Activated T-helper 2 cell treated with anti-CD3 and anti-CD28 coated beads, Interferon-gamma antibody, Interleukin-2, Interleukin-4, amounts not matched to agents 10 μg/mL and 5 μg/mL and 100 μg/mL, durations not matched to agents 14 hours and 24 hours and 36 hours (primary cell): ENCODE measurements at regions of chr16 and their contacts with region 1.

Region 1: GRCh38 chr16:425082-425718 is at the start of gene RAB11FIP3:
- DNase-seq: peak; percentile 81
- H3K4me3 Mint-ChIP-seq: peak within 1 kb of the TSS; percentile 81
- H3K27ac Mint-ChIP-seq: peak within 1 kb of the TSS; percentile 70
- H3K4me1 Mint-ChIP-seq: peaks cover 30% of the 10 kb centered on the region
- H3K27me3 Mint-ChIP-seq: peaks cover 12% of the 10 kb centered on the region
- total RNA-seq, gene RAB11FIP3: 45.7 and 47.2 TPM in 2 replicates

Region 2: DNA sequence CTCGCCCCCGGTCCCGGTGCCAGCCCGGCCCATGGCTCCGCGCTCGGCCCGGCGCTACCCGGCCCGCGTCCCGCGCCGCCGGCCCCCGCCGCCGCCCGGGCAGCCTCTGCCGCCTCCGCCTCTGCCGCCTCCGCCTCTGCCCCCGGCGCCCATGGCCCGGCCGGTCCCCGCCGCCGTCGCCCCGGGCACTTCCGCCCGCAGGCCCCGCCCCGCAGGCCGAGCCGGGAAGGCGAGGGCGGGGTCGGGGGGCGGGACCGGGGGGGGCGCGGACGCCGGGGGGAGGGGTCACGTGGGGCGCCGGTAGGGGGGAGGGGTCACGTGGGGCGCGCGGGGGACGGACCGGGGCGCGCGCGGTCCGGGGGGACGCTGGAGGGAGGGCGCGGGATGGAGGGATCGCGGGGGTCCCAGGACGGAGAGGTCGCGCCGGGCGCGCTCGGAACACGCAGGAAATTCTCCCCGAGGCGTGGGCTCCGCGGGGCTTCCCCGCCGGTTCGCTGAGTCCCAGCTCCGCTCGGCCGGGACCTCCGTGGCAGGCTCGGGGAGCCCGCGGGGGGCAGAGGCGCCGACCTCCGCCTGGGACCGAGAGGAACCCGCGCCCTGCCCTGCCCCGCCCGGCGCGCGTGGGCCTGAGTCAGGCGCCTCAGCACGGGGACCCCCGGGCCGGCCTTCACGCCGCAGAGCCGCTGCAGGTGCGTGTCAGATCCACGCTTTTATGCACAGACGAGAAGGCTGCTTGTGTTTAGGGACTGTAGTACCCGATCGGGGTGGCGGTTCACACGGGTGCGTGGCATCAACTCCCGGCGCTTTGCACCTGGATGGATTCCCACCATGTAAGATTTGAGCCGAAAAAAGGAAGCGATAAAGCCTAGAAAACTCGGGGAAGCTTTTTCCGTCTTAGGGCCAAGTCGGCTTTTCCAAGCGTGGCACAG is 43.1 kb before region 1 on chr16 and contains the start of gene PGAP6:
- intact Hi-C with region 1: loop called (anchors 5 kb)
- DNase-seq: peak; percentile 59
- H3K4me3 Mint-ChIP-seq: peak within 1 kb of the TSS; percentile 78
- H3K27ac Mint-ChIP-seq: no peak within 1 kb of the TSS
- H3K4me1 Mint-ChIP-seq: peaks cover 9% of the 10 kb centered on the region
- H3K27me3 Mint-ChIP-seq: no peaks in the 10 kb centered on the region
- total RNA-seq, gene PGAP6: 34.3 and 36.7 TPM in 2 replicates